ENCODE measurements at regions of chr11 and their contacts with region 1.

Region 1: GRCh38 chr11:100929377-100929776 is 200.2 kb downstream of the PGR start:
- DNase-seq: no peak
- H3K4me3 ChIP-seq: no peak overlapping the region
- H3K27ac ChIP-seq: no peak overlapping the region
- H3K4me1 ChIP-seq: no peaks in the 10 kb centered on the region
- H3K27me3 ChIP-seq: no peaks in the 10 kb centered on the region

Region 2: DNA sequence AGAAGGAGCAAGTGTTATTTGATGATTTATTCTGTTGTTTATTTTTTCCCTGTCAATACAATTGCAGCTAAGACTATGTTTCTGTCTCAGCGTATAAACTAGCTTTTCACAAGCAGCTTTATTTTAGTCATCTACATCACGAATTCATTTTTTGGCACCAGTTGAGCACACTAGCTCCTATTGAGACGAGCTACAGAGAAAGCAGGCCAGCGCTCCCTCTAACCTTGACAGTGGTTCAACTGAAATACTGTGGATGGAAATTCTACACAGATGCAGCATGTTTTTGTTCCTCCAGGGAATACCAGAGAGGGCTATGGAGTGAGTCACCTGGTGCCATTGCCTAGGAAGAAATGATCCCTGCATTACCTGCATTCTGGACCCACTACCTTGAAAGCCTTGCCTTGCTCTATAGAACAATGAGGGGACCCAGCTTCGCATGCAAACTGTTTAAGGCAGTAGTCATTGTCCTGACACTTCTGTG is 350.5 kb before region 1 on chr11:
- CTCF ChIA-PET with region 1: interaction called, 12 read pairs
- POLR2A ChIA-PET with region 1: no interaction called
- DNase-seq: no peak
- H3K4me3 ChIP-seq: no peak overlapping the region
- H3K27ac ChIP-seq: no peak overlapping the region
- H3K4me1 ChIP-seq: peaks cover 0 to 2% (median 0%) of the 10 kb centered on the region in 4 experiments
- H3K27me3 ChIP-seq: peaks cover 0 to 2% (median 0%) of the 10 kb centered on the region in 5 experiments

Region 3: DNA sequence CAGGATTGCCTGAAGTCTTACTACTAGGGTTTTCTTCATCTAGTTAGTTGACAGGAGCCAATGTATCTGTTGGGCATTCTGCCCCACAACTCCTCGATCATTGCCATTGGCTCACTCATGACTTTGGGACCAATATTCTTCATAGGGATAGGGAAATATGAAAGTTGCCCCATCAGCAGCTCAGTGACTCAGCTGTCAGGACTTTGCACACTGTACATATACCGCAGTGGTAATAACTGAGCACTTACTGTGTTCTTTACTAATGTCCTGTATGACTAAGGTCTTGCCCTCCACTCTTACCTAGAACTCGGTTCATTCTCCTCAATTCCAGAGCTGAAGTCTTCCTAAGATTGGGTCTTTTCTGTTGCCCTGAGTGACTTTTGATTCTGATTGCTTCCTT is 247.0 kb after region 1 on chr11:
- CTCF ChIA-PET with region 1: no interaction called
- POLR2A ChIA-PET with region 1: no interaction called
- DNase-seq: no peak
- H3K4me3 ChIP-seq: no peak overlapping the region
- H3K27ac ChIP-seq: no peak overlapping the region
- H3K4me1 ChIP-seq: no peaks in the 10 kb centered on the region
- H3K27me3 ChIP-seq: no peaks in the 10 kb centered on the region

Measured in common myeloid progenitor, CD34-positive (primary cell).